ENCODE measurements at regions of chr22 and their contacts with region 1.

Region 1: GRCh38 chr22:42090596-42091454 is at the start of gene NDUFA6:
- DNase-seq: peak; percentile 97 to 99 (median 99)
- H3K4me3 ChIP-seq: peak within 1 kb of the TSS; percentile 79 to 93
- H3K4me3 Mint-ChIP-seq: peak within 1 kb of the TSS; percentile 97 to 100 (median 99)
- H3K27ac ChIP-seq: peak within 1 kb of the TSS; percentile 98
- H3K27ac Mint-ChIP-seq: peak within 1 kb of the TSS; percentile 99 to 100 (median 99)
- H3K4me1 ChIP-seq: peaks cover 27% of the 10 kb centered on the region
- H3K4me1 Mint-ChIP-seq: peaks cover 23 to 48% (median 35%) of the 10 kb centered on the region in 4 donors
- H3K27me3 ChIP-seq: no peaks in the 10 kb centered on the region
- H3K27me3 Mint-ChIP-seq: no peaks in the 10 kb centered on the region
- total RNA-seq, gene NDUFA6: 42.1 to 44.4 TPM

Region 2: GRCh38 chr22:41888627-41889200 is 202.1 kb before region 1 on chr22:
- CTCF ChIA-PET with region 1: no interaction called
- POLR2A ChIA-PET with region 1: no interaction called
- intact Hi-C with region 1: no loop called
- DNase-seq: no peak
- H3K4me3 ChIP-seq: no peak overlapping the region
- H3K4me3 Mint-ChIP-seq: no peak overlapping the region
- H3K27ac ChIP-seq: no peak overlapping the region
- H3K27ac Mint-ChIP-seq: no peak overlapping the region
- H3K4me1 ChIP-seq: no peaks in the 10 kb centered on the region
- H3K4me1 Mint-ChIP-seq: no peaks in the 10 kb centered on the region
- H3K27me3 ChIP-seq: no peaks in the 10 kb centered on the region
- H3K27me3 Mint-ChIP-seq: no peaks in the 10 kb centered on the region

Region 3: GRCh38 chr22:42070517-42071422 is 20.1 kb before region 1 on chr22 and contains the start of gene NAGA:
- CTCF ChIA-PET with region 1: interaction called, 11 read pairs
- POLR2A ChIA-PET with region 1: interaction called, 39 read pairs
- intact Hi-C with region 1: no loop called
- DNase-seq: peak; percentile 89 to 95 (median 90)
- H3K4me3 ChIP-seq: peak within 1 kb of the TSS; percentile 37 to 51
- H3K4me3 Mint-ChIP-seq: peak within 1 kb of the TSS; percentile 92 to 95 (median 92)
- H3K27ac ChIP-seq: peak within 1 kb of the TSS; percentile 74
- H3K27ac Mint-ChIP-seq: peak within 1 kb of the TSS; percentile 93 to 97 (median 94)
- H3K4me1 ChIP-seq: peaks cover 40% of the 10 kb centered on the region
- H3K4me1 Mint-ChIP-seq: peaks cover 20 to 59% (median 39%) of the 10 kb centered on the region in 4 donors
- H3K27me3 ChIP-seq: no peaks in the 10 kb centered on the region
- H3K27me3 Mint-ChIP-seq: no peaks in the 10 kb centered on the region
- total RNA-seq, gene NAGA: 13.9 to 14.5 TPM

Region 4: DNA sequence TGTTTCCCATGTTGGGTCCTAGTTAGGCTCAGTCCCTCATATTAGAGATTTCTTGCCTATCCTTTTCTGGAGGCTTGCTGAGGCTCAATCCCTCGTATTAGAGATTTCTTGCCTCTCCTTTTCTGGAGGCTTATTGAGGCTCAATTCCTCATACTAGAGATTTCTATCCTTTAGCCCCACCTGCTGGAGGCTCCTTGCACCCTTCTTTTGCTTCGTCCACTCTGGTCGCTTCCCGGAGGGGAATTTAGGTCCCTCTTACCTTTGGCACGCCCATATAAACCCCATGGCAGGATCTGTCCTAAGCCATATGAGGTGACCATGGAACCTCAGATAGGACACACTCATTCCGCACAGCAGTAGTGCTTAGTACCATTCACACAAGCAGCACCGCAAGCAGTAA is 23.9 kb after region 1 on chr22:
- CTCF ChIA-PET with region 1: interaction called, 23 read pairs
- POLR2A ChIA-PET with region 1: interaction called, 9 read pairs
- intact Hi-C with region 1: no loop called
- DNase-seq: no peak
- H3K4me3 ChIP-seq: no peak overlapping the region
- H3K4me3 Mint-ChIP-seq: no peak overlapping the region
- H3K27ac ChIP-seq: no peak overlapping the region
- H3K27ac Mint-ChIP-seq: peak overlapping the region in 1 of 7 donors; percentile 3
- H3K4me1 ChIP-seq: peaks cover 11% of the 10 kb centered on the region
- H3K4me1 Mint-ChIP-seq: peaks cover 7 to 21% (median 14%) of the 10 kb centered on the region in 4 donors
- H3K27me3 ChIP-seq: no peaks in the 10 kb centered on the region
- H3K27me3 Mint-ChIP-seq: no peaks in the 10 kb centered on the region

Region 5: DNA sequence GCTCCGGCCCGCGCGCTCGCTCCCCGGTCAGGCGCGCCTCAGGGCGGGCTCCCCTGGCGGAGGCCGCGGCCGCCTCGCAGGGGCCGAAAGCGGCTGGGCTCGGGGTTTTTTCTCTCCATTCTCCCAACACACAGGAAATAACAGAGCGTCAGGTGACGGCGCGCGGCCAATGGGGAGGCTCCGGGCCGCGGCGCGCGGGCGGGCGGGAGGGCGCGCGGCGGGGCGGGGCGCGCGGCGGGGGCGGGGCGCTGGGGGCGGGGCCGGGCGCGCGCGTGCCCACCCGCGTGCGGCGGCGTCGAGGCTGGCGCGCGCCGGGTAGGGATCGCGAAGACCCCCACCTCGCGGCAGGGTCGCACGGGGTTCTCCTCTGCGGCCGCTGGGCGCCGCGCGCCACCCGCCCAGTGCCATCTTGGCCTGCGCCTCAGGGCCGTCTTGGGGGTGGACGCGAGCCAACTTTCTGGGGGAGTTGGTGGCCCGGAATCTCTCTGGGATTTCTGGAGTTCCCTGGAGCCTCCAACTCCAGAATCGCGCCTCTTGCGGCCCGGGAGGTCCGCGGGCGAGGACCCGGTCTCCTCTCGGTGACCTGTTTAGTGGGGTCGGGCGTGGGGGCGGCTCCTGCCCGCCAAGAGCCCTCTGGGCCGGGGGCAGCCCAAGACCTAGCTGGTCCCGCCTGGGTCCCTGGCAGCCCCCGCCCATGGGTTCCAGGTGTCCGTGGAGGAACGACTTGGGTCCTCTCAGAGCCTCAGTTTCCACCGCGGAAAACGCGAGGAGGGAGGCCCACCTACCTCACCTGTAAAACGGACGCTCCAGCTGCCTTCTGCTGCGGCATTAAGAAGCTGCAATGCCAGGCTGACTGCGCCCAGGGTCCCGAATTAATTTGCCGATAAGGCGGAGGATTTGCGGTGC is 179.9 kb after region 1 on chr22 and contains the start of gene TCF20:
- CTCF ChIA-PET with region 1: interaction called, 4 read pairs
- POLR2A ChIA-PET with region 1: interaction called, 6 read pairs
- intact Hi-C with region 1: loop called (anchors 2 kb)
- DNase-seq: peak; percentile 78 to 82 (median 80)
- H3K4me3 ChIP-seq: peak within 1 kb of the TSS; percentile 26 to 80
- H3K4me3 Mint-ChIP-seq: peak within 1 kb of the TSS; percentile 88 to 95 (median 93)
- H3K27ac ChIP-seq: peak within 1 kb of the TSS; percentile 91
- H3K27ac Mint-ChIP-seq: peak within 1 kb of the TSS; percentile 87 to 95 (median 90)
- H3K4me1 ChIP-seq: peaks cover 42% of the 10 kb centered on the region
- H3K4me1 Mint-ChIP-seq: peaks cover 21 to 39% (median 29%) of the 10 kb centered on the region in 4 donors
- H3K27me3 ChIP-seq: no peaks in the 10 kb centered on the region
- H3K27me3 Mint-ChIP-seq: no peaks in the 10 kb centered on the region
- total RNA-seq, gene TCF20: 88.7 to 93.4 TPM

Region 6: DNA sequence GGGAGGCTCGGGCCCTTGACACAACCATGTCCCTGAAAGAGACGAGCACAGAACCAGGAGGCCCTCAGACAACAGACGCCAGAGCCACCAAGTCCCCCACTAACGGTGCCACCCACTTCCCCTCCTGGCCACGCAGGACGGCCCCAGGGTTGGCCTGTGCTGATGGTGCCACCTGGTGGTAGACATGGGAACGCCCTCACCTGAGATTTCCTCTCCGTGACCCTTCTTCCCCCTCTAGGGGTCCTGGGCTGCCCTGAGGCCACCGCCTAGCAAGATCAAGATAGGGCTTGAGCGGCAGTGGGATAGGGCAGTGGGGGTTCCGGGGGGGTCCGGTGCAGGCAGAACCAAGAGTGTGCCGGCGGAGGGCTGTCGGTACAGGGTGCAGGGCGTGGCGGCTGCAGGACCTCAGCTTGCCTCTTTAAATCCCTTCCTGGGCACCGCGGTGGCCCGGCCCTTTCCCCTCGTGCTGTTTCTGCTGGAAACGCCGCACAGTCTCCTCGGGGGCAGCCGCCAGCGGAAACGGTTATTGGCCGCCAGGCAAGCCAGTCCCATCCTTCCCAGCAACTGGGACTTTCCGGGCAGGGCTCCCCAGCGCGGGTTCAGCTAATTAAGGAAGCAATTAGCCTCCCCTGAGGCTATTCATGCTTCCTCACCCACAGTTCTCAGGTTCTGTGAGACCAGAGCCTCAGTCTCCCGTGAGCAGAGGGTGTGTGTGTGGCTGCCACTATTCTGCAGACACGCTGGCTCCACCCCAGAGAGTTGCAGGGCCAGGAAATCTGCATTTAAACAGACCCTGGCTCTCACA is 346.9 kb after region 1 on chr22:
- CTCF ChIA-PET with region 1: interaction called, 61 read pairs
- POLR2A ChIA-PET with region 1: interaction called, 54 read pairs
- intact Hi-C with region 1: loop called (anchors 1 kb)
- DNase-seq: peak; percentile 80 to 86 (median 81)
- H3K4me3 ChIP-seq: peak overlapping the region; percentile 48 to 79
- H3K4me3 Mint-ChIP-seq: peak overlapping the region; percentile 77 to 91 (median 84)
- H3K27ac ChIP-seq: peak overlapping the region; percentile 3
- H3K27ac Mint-ChIP-seq: peak overlapping the region in 5 of 7 donors; percentile 48 to 83 (median 76)
- H3K4me1 ChIP-seq: peaks cover 10% of the 10 kb centered on the region
- H3K4me1 Mint-ChIP-seq: peaks cover 4 to 17% (median 7%) of the 10 kb centered on the region in 4 donors
- H3K27me3 ChIP-seq: no peaks in the 10 kb centered on the region
- H3K27me3 Mint-ChIP-seq: peaks cover 0 to 2% of the 10 kb centered on the region in 2 donors